Endothelial cell of umbilical vein (primary cell): ENCODE measurements at regions of chr21 and their contacts with region 1.

Region 1: GRCh38 chr21:17387030-17387617 is 125.7 kb upstream of the CXADR start:
- DNase-seq: peak; percentile 67
- H3K4me3 ChIP-seq: no peak overlapping the region
- H3K27ac ChIP-seq: no peak overlapping the region
- H3K4me1 ChIP-seq: no peaks in the 10 kb centered on the region
- H3K27me3 ChIP-seq: peaks cover 0 to 12% of the 10 kb centered on the region in 2 experiments
- CTCF ChIP-seq: peak; percentile 23 to 54
- POLR2A ChIP-seq: no peak

Region 2: DNA sequence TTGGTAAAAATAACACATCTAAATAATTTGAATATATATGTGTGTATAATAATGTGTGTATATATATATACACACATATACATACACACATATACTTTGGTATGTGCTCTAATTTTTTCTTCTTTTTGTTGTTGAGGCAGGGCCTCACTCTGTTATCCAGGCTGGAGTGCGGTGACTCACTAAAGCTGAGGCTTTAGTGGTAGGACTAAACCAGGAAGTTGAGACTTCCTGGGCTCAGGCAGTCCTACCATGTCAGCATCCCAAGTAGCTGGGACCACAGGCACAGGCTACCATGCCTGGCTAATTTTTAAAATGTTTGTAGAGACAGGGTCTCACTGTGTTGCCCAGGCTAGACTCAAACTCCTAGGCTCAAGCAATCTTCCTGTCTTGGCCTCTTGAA is 79.0 kb after region 1 on chr21:
- CTCF ChIA-PET with region 1: interaction called, 13 read pairs
- POLR2A ChIA-PET with region 1: no interaction called
- dilution Hi-C with region 1: no loop called
- intact Hi-C with region 1: no loop called
- DNase-seq: no peak
- H3K4me3 ChIP-seq: no peak overlapping the region
- H3K27ac ChIP-seq: no peak overlapping the region
- H3K4me1 ChIP-seq: peaks cover 5% of the 10 kb centered on the region
- H3K27me3 ChIP-seq: no peaks in the 10 kb centered on the region
- CTCF ChIP-seq: no peak
- POLR2A ChIP-seq: no peak

Region 3: GRCh38 chr21:17512253-17513213 is 125.4 kb after region 1 on chr21 and contains the start of gene CXADR:
- CTCF ChIA-PET with region 1: interaction called, 68 read pairs
- POLR2A ChIA-PET with region 1: no interaction called
- dilution Hi-C with region 1: no loop called
- intact Hi-C with region 1: loop called (anchors 1 kb)
- DNase-seq: peak; percentile 48
- H3K4me3 ChIP-seq: peak within 1 kb of the TSS; percentile 11 to 97 (median 73)
- H3K27ac ChIP-seq: peak within 1 kb of the TSS; percentile 26
- H3K4me1 ChIP-seq: peaks cover 15% of the 10 kb centered on the region
- H3K27me3 ChIP-seq: peaks cover 2 to 19% of the 10 kb centered on the region in 2 experiments
- CTCF ChIP-seq: peak; percentile 21 to 77
- POLR2A ChIP-seq: no peak
- total RNA-seq, gene CXADR: 10.7 and 12.2 TPM in 2 replicates

Region 4: GRCh38 chr21:17537299-17537698 is 150.2 kb after region 1 on chr21:
- CTCF ChIA-PET with region 1: interaction called, 18 read pairs
- POLR2A ChIA-PET with region 1: no interaction called
- dilution Hi-C with region 1: no loop called
- intact Hi-C with region 1: no loop called
- DNase-seq: peak; percentile 43
- H3K4me3 ChIP-seq: no peak overlapping the region
- H3K27ac ChIP-seq: no peak overlapping the region
- H3K4me1 ChIP-seq: peaks cover 20% of the 10 kb centered on the region
- H3K27me3 ChIP-seq: peaks cover 0 to 2% of the 10 kb centered on the region in 2 experiments
- CTCF ChIP-seq: no peak
- POLR2A ChIP-seq: no peak

Region 5: DNA sequence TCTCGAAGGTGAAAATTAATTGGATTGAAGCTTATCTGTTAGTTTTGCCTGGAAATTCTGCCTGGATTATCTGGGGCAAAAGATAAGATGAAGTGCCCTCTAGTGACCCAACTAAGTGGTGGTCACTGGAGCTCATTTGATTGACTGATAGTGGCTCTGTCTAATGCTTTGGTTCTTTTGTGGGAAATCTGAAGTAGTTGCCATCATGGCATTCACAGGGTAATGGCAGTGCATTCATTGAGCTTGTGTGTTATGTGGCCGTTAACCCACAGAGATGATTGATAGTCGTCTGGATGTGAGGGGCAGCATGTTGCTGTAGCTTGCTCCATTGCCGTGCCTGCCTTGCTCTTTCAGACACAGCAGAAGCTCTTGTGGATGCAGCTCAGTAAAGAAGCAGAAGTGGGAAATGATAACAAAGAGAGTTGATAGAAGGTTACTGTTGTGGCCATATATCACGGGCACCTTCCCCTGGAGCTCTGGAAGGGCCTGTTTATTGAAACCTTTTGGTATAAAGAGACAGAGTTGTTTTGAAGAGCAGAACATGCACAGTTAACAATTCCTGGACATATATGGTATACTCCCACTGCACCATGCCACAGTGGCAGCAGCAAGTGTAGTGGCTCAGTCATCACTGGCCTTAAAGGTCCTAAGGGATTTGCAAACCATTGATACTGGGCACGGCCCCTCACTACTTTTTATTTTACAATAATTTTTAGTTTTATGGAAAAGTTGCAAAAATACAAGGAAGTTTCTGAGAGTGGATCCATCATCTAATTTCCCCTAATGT is 167.7 kb after region 1 on chr21:
- CTCF ChIA-PET with region 1: interaction called, 312 read pairs
- POLR2A ChIA-PET with region 1: interaction called, 3 read pairs
- dilution Hi-C with region 1: no loop called
- intact Hi-C with region 1: loop called (anchors 1 kb)
- DNase-seq: peak; percentile 25
- H3K4me3 ChIP-seq: no peak overlapping the region
- H3K27ac ChIP-seq: no peak overlapping the region
- H3K4me1 ChIP-seq: no peaks in the 10 kb centered on the region
- H3K27me3 ChIP-seq: no peaks in the 10 kb centered on the region
- CTCF ChIP-seq: peak; percentile 23 to 30
- POLR2A ChIP-seq: no peak

Region 6: DNA sequence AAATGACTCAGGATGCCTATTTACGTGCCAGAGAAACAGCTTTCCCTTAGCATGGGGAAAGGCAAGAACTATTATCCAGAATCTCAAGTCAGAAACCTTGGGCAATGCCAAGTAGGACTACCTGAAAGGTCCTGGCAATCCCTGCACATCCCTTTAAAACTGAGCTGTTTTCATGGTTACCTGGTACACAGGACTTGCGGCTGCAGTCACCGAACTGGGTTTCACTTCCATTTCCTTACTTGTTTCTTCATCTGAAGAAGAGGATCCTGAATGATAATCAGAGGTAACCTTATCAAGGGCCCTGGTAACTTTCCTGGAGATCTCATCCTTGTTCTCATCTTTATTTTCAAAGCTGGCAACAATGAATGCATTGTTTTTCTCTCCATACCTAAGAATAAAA is 211.3 kb after region 1 on chr21:
- CTCF ChIA-PET with region 1: interaction called, 11 read pairs
- POLR2A ChIA-PET with region 1: no interaction called
- dilution Hi-C with region 1: no loop called
- intact Hi-C with region 1: no loop called
- DNase-seq: no peak
- H3K4me3 ChIP-seq: no peak overlapping the region
- H3K27ac ChIP-seq: no peak overlapping the region
- H3K4me1 ChIP-seq: no peaks in the 10 kb centered on the region
- H3K27me3 ChIP-seq: no peaks in the 10 kb centered on the region
- CTCF ChIP-seq: no peak
- POLR2A ChIP-seq: no peak

Region 7: GRCh38 chr21:18204931-18205330 is 817.8 kb after region 1 on chr21:
- CTCF ChIA-PET with region 1: no interaction called
- POLR2A ChIA-PET with region 1: no interaction called
- dilution Hi-C with region 1: no loop called
- intact Hi-C with region 1: no loop called
- DNase-seq: peak; percentile 17
- H3K4me3 ChIP-seq: no peak overlapping the region
- H3K27ac ChIP-seq: no peak overlapping the region
- H3K4me1 ChIP-seq: no peaks in the 10 kb centered on the region
- H3K27me3 ChIP-seq: no peaks in the 10 kb centered on the region
- CTCF ChIP-seq: peak in 1 of 2 donors; percentile 24
- POLR2A ChIP-seq: no peak